ENCODE measurements at regions of chr6 and their contacts with region 1.

Region 1: GRCh38 chr6:36594029-36594815 is at the start of gene SRSF3:
- DNase-seq: peak; percentile 92 to 98 (median 97)
- H3K4me3 ChIP-seq: peak within 1 kb of the TSS; percentile 77
- H3K4me3 Mint-ChIP-seq: peak within 1 kb of the TSS; percentile 94 to 100 (median 97)
- H3K27ac ChIP-seq: peak within 1 kb of the TSS; percentile 98
- H3K27ac Mint-ChIP-seq: peak within 1 kb of the TSS; percentile 98 to 100 (median 99)
- H3K4me1 ChIP-seq: peaks cover 39% of the 10 kb centered on the region
- H3K4me1 Mint-ChIP-seq: peaks cover 38 to 57% (median 53%) of the 10 kb centered on the region in 3 donors
- H3K27me3 ChIP-seq: no peaks in the 10 kb centered on the region
- H3K27me3 Mint-ChIP-seq: peaks cover 0 to 8% of the 10 kb centered on the region in 2 donors
- total RNA-seq, gene SRSF3: 572 to 579 TPM

Region 2: GRCh38 chr6:36546920-36547645 is 47.1 kb before region 1 on chr6 and contains the start of gene STK38:
- CTCF ChIA-PET with region 1: interaction called, 7 read pairs
- POLR2A ChIA-PET with region 1: interaction called, 107 read pairs
- DNase-seq: peak; percentile 87 to 94 (median 93)
- H3K4me3 ChIP-seq: peak within 1 kb of the TSS; percentile 89
- H3K4me3 Mint-ChIP-seq: peak within 1 kb of the TSS; percentile 98 to 100 (median 99)
- H3K27ac ChIP-seq: peak within 1 kb of the TSS; percentile 92
- H3K27ac Mint-ChIP-seq: peak within 1 kb of the TSS; percentile 92 to 100 (median 98)
- H3K4me1 ChIP-seq: peaks cover 36% of the 10 kb centered on the region
- H3K4me1 Mint-ChIP-seq: peaks cover 35 to 55% (median 52%) of the 10 kb centered on the region in 3 donors
- H3K27me3 ChIP-seq: no peaks in the 10 kb centered on the region
- H3K27me3 Mint-ChIP-seq: peaks cover 0 to 2% of the 10 kb centered on the region in 2 donors
- total RNA-seq, gene STK38: 44.9 to 47.6 TPM

Region 3: GRCh38 chr6:36605560-36606391 is 11.6 kb after region 1 on chr6:
- CTCF ChIA-PET with region 1: interaction called, 6 read pairs
- POLR2A ChIA-PET with region 1: interaction called, 13 read pairs
- DNase-seq: no peak
- H3K4me3 ChIP-seq: no peak overlapping the region
- H3K4me3 Mint-ChIP-seq: peak overlapping the region in 6 of 7 donors; percentile 3 to 57 (median 47)
- H3K27ac ChIP-seq: no peak overlapping the region
- H3K27ac Mint-ChIP-seq: peak overlapping the region; percentile 49 to 99 (median 87)
- H3K4me1 ChIP-seq: peaks cover 70% of the 10 kb centered on the region
- H3K4me1 Mint-ChIP-seq: peaks cover 74 to 93% (median 85%) of the 10 kb centered on the region in 3 donors
- H3K27me3 ChIP-seq: no peaks in the 10 kb centered on the region
- H3K27me3 Mint-ChIP-seq: no peaks in the 10 kb centered on the region

Measured in CD8-positive, alpha-beta memory T cell (primary cell).